HCT116 (cell line): ENCODE measurements at regions of chr16 and their contacts with region 1.

Region 1: GRCh38 chr16:31179747-31180459 is at the start of gene FUS:
- DNase-seq: peak; percentile 76
- ATAC-seq: peak; percentile 71
- H3K4me3 ChIP-seq: peak within 1 kb of the TSS; percentile 90 to 93
- H3K27ac ChIP-seq: peak within 1 kb of the TSS; percentile 92
- H3K4me1 ChIP-seq: peaks cover 10 to 26% of the 10 kb centered on the region in 2 experiments
- H3K27me3 ChIP-seq: no peaks in the 10 kb centered on the region
- CTCF ChIP-seq: no peak
- POLR2A ChIP-seq: peak; percentile 100
- RAD21 ChIP-seq: 0 out of 2 replicates have a peak, but pooled peaks have one; percentile 5
- total RNA-seq, gene FUS: 522 TPM

Region 2: DNA sequence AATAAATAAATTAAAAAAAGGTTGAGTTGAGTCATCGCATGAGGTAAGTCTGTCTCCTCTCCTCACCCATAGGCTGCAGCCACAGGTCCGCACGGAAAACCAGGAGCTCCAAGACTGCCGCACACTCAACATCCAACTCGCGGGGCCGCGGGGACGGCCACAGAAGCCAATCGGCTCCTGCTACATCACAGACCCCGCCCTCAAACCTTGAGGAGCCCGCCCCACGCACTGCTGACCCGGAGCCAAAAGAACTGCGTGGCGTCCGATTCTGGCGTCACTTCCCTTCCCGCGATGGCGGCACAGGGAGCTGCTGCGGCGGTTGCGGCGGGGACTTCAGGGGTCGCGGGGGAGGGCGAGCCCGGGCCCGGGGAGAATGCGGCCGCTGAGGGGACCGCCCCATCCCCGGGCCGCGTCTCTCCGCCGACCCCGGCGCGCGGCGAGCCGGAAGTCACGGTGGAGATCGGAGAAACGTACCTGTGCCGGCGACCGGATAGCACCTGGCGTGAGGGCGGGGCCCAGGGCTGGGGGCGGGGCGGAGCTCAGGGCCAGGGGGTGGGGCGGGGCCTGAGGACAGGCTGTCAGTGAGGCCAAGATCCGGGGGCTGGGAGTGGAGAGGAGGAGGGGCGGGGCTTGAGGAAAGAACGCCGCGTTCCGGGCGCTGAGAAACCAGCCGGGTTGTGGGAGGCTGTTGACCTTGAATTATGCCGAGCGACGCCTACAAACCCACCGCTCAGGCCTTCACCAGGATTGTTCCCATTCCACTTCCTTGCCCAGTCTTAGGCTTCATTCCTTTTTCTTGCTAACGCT is 62.3 kb before region 1 on chr16 and contains the start of gene KAT8:
- CTCF ChIA-PET with region 1: no interaction called
- POLR2A ChIA-PET with region 1: interaction called, 12 read pairs
- RAD21 ChIA-PET with region 1: no interaction called
- intact Hi-C with region 1: no loop called
- DNase-seq: peak; percentile 97
- ATAC-seq: peak; percentile 92
- H3K4me3 ChIP-seq: peak within 1 kb of the TSS; percentile 70 to 82
- H3K27ac ChIP-seq: peak within 1 kb of the TSS; percentile 80
- H3K4me1 ChIP-seq: peaks cover 7 to 30% of the 10 kb centered on the region in 2 experiments; a peak in 3 of 4 replicates
- H3K27me3 ChIP-seq: no peaks in the 10 kb centered on the region
- CTCF ChIP-seq: no peak
- POLR2A ChIP-seq: peak; percentile 56
- RAD21 ChIP-seq: no peak
- total RNA-seq, gene KAT8: 44.9 TPM

Region 3: GRCh38 chr16:31215287-31216162 is 35.6 kb after region 1 on chr16:
- CTCF ChIA-PET with region 1: no interaction called
- POLR2A ChIA-PET with region 1: interaction called, 13 read pairs
- RAD21 ChIA-PET with region 1: no interaction called
- intact Hi-C with region 1: no loop called
- DNase-seq: peak; percentile 63
- ATAC-seq: peak; percentile 90
- H3K4me3 ChIP-seq: peak overlapping the region; percentile 89 to 96
- H3K27ac ChIP-seq: peak overlapping the region; percentile 95
- H3K4me1 ChIP-seq: peaks cover 9 to 33% of the 10 kb centered on the region in 2 experiments
- H3K27me3 ChIP-seq: no peaks in the 10 kb centered on the region
- CTCF ChIP-seq: no peak
- POLR2A ChIP-seq: peak; percentile 63
- RAD21 ChIP-seq: no peak

Region 4: GRCh38 chr16:31412750-31413149 is 232.8 kb after region 1 on chr16:
- CTCF ChIA-PET with region 1: no interaction called
- POLR2A ChIA-PET with region 1: no interaction called
- RAD21 ChIA-PET with region 1: no interaction called
- intact Hi-C with region 1: no loop called
- DNase-seq: no peak
- ATAC-seq: no peak
- H3K4me3 ChIP-seq: no peak overlapping the region
- H3K27ac ChIP-seq: no peak overlapping the region
- H3K4me1 ChIP-seq: peaks cover 0 to 10% of the 10 kb centered on the region in 2 experiments; a peak in 2 of 4 replicates
- H3K27me3 ChIP-seq: no peaks in the 10 kb centered on the region
- CTCF ChIP-seq: no peak
- POLR2A ChIP-seq: no peak
- RAD21 ChIP-seq: no peak